ENCODE measurements at regions of chr19 and their contacts with region 1.

Region 1: GRCh38 chr19:7943444-7944176 is at the start of gene TIMM44:
- DNase-seq: peak; percentile 99
- H3K4me3 ChIP-seq: peak within 1 kb of the TSS; percentile 73 to 93 (median 88)
- H3K27ac ChIP-seq: peak within 1 kb of the TSS; percentile 89
- H3K4me1 ChIP-seq: peaks cover 9% of the 10 kb centered on the region
- H3K27me3 ChIP-seq: no peaks in the 10 kb centered on the region
- CTCF ChIP-seq: no peak
- POLR2A ChIP-seq: peak; percentile 96
- total RNA-seq, gene TIMM44: 61.5 and 62.9 TPM in 2 replicates

Region 2: GRCh38 chr19:7868676-7869452 is 74.7 kb before region 1 on chr19:
- CTCF ChIA-PET with region 1: interaction called, 10 read pairs
- POLR2A ChIA-PET with region 1: no interaction called
- dilution Hi-C with region 1: no loop called
- intact Hi-C with region 1: no loop called
- DNase-seq: peak; percentile 65
- H3K4me3 ChIP-seq: peak overlapping the region in 1 of 3 experiments; percentile 14
- H3K27ac ChIP-seq: no peak overlapping the region
- H3K4me1 ChIP-seq: peaks cover 7% of the 10 kb centered on the region
- H3K27me3 ChIP-seq: peaks cover 21 to 24% of the 10 kb centered on the region in 2 experiments
- CTCF ChIP-seq: peak; percentile 66 to 84
- POLR2A ChIP-seq: no peak

Region 3: GRCh38 chr19:7925171-7925851 is 18.3 kb before region 1 on chr19:
- CTCF ChIA-PET with region 1: interaction called, 41 read pairs
- POLR2A ChIA-PET with region 1: interaction called, 21 read pairs
- dilution Hi-C with region 1: no loop called
- intact Hi-C with region 1: loop called (anchors 1 kb)
- DNase-seq: peak; percentile 79
- H3K4me3 ChIP-seq: peak overlapping the region in 2 of 3 experiments; percentile 18 to 29
- H3K27ac ChIP-seq: no peak overlapping the region
- H3K4me1 ChIP-seq: peaks cover 28% of the 10 kb centered on the region
- H3K27me3 ChIP-seq: no peaks in the 10 kb centered on the region
- CTCF ChIP-seq: peak; percentile 95 to 96
- POLR2A ChIP-seq: no peak

Region 4: GRCh38 chr19:7961921-7962626 is 18.5 kb after region 1 on chr19:
- CTCF ChIA-PET with region 1: interaction called, 13 read pairs
- POLR2A ChIA-PET with region 1: no interaction called
- dilution Hi-C with region 1: no loop called
- intact Hi-C with region 1: no loop called
- DNase-seq: no peak
- H3K4me3 ChIP-seq: no peak overlapping the region
- H3K27ac ChIP-seq: no peak overlapping the region
- H3K4me1 ChIP-seq: no peaks in the 10 kb centered on the region
- H3K27me3 ChIP-seq: no peaks in the 10 kb centered on the region
- CTCF ChIP-seq: no peak
- POLR2A ChIP-seq: no peak

Region 5: GRCh38 chr19:7989071-7989575 is 45.5 kb after region 1 on chr19:
- CTCF ChIA-PET with region 1: interaction called, 15 read pairs
- POLR2A ChIA-PET with region 1: no interaction called
- dilution Hi-C with region 1: no loop called
- intact Hi-C with region 1: no loop called
- DNase-seq: no peak
- H3K4me3 ChIP-seq: no peak overlapping the region
- H3K27ac ChIP-seq: no peak overlapping the region
- H3K4me1 ChIP-seq: peaks cover 8% of the 10 kb centered on the region
- H3K27me3 ChIP-seq: no peaks in the 10 kb centered on the region
- CTCF ChIP-seq: no peak
- POLR2A ChIP-seq: no peak

Region 6: GRCh38 chr19:8069096-8069973 is 125.7 kb after region 1 on chr19:
- CTCF ChIA-PET with region 1: interaction called, 4 read pairs
- POLR2A ChIA-PET with region 1: no interaction called
- dilution Hi-C with region 1: no loop called
- intact Hi-C with region 1: loop called (anchors 2 kb)
- DNase-seq: no peak
- H3K4me3 ChIP-seq: no peak overlapping the region
- H3K27ac ChIP-seq: no peak overlapping the region
- H3K4me1 ChIP-seq: no peaks in the 10 kb centered on the region
- H3K27me3 ChIP-seq: no peaks in the 10 kb centered on the region
- CTCF ChIP-seq: peak; percentile 38 to 40
- POLR2A ChIP-seq: no peak

Region 7: DNA sequence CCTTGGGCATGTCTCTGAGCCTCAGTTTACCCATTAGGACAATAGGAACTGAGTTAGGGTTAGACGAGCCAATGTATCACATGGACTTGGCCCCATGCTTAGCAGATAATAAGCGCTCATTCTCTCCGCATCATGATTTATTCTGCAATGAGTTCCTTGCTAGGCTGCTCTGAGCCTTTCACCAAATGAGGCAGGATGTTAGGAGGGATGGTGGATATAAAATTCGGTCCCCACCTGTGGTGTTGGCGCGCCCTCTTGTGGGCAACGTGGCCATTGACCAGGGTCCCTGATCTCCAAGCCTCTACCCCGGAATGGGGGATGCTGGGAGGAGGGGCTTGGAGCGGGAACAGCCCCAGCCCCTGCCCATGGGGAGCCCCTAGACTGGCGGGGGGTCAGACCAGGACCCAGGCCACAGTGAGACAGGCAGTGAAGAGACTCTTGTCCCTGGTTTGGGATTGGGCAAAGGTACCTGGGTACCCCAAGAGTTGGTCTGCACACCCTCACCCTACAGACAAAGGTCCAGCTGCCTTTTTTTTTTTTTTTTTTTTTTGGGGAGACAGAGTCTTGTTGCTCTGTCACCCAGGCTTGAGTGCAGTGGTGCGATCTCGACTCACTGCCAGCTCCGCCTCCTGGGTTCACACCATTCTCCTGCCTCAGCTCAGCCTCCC is 309.4 kb after region 1 on chr19:
- CTCF ChIA-PET with region 1: interaction called, 101 read pairs
- POLR2A ChIA-PET with region 1: interaction called, 6 read pairs
- dilution Hi-C with region 1: no loop called
- intact Hi-C with region 1: loop called (anchors 1 kb)
- DNase-seq: peak; percentile 69
- H3K4me3 ChIP-seq: no peak overlapping the region
- H3K27ac ChIP-seq: no peak overlapping the region
- H3K4me1 ChIP-seq: no peaks in the 10 kb centered on the region
- H3K27me3 ChIP-seq: no peaks in the 10 kb centered on the region
- CTCF ChIP-seq: peak; percentile 88 to 91
- POLR2A ChIP-seq: no peak